CD8-positive, alpha-beta T cell (primary cell): ENCODE measurements at regions of chr4 and their contacts with region 1.

Region 1: GRCh38 chr4:135306538-135306937 is 1104.9 kb upstream of the PABPC4L start:
- DNase-seq: no peak
- ATAC-seq: no peak
- H3K4me3 ChIP-seq: no peak overlapping the region
- H3K4me3 Mint-ChIP-seq: no peak overlapping the region
- H3K27ac ChIP-seq: no peak overlapping the region
- H3K27ac Mint-ChIP-seq: no peak overlapping the region
- H3K4me1 ChIP-seq: no peaks in the 10 kb centered on the region
- H3K4me1 Mint-ChIP-seq: no peaks in the 10 kb centered on the region
- H3K27me3 ChIP-seq: no peaks in the 10 kb centered on the region
- H3K27me3 Mint-ChIP-seq: no peaks in the 10 kb centered on the region
- CTCF ChIP-seq: no peak

Region 2: GRCh38 chr4:135240796-135241195 is 65.7 kb before region 1 on chr4:
- CTCF ChIA-PET with region 1: no interaction called
- POLR2A ChIA-PET with region 1: no interaction called
- intact Hi-C with region 1: no loop called
- DNase-seq: no peak
- ATAC-seq: no peak
- H3K4me3 ChIP-seq: no peak overlapping the region
- H3K4me3 Mint-ChIP-seq: no peak overlapping the region
- H3K27ac ChIP-seq: no peak overlapping the region
- H3K27ac Mint-ChIP-seq: no peak overlapping the region
- H3K4me1 ChIP-seq: no peaks in the 10 kb centered on the region
- H3K4me1 Mint-ChIP-seq: no peaks in the 10 kb centered on the region
- H3K27me3 ChIP-seq: no peaks in the 10 kb centered on the region
- H3K27me3 Mint-ChIP-seq: no peaks in the 10 kb centered on the region
- CTCF ChIP-seq: no peak

Region 3: DNA sequence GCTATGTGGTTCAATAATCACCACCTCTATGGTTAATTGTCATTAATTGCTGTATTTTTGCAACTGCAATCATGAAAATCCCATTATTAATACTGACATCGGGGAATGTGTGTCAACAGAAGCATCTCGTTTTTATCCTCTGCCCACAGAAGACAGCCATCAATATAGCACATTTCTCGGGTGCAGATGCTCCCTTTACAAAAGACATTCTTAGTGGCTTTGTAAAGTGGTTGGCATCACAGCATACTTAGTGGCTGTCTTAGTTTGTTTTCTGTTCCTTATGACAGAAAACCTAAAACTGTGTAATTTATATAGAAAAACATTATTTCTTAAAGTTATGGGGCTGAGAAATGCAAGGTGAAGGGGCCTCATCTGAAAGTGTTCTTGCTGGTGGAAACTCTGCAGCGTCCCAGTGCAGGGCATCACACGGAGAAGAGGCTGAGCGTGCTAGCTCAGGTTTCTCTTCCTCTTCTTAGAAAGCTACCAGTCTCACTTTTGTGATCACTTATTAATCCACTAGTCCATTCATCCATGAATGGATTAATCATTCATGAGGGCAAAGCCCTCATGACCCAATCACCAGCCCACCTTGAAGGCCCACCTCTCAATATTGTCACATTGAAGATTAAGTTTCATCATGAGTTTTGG is 37.3 kb before region 1 on chr4:
- CTCF ChIA-PET with region 1: no interaction called
- POLR2A ChIA-PET with region 1: no interaction called
- intact Hi-C with region 1: no loop called
- DNase-seq: no peak
- ATAC-seq: no peak
- H3K4me3 ChIP-seq: no peak overlapping the region
- H3K4me3 Mint-ChIP-seq: no peak overlapping the region
- H3K27ac ChIP-seq: no peak overlapping the region
- H3K27ac Mint-ChIP-seq: no peak overlapping the region
- H3K4me1 ChIP-seq: no peaks in the 10 kb centered on the region
- H3K4me1 Mint-ChIP-seq: no peaks in the 10 kb centered on the region
- H3K27me3 ChIP-seq: no peaks in the 10 kb centered on the region
- H3K27me3 Mint-ChIP-seq: no peaks in the 10 kb centered on the region
- CTCF ChIP-seq: no peak

Region 4: GRCh38 chr4:135282676-135283075 is 23.9 kb before region 1 on chr4:
- CTCF ChIA-PET with region 1: no interaction called
- POLR2A ChIA-PET with region 1: no interaction called
- intact Hi-C with region 1: no loop called
- DNase-seq: no peak
- ATAC-seq: no peak
- H3K4me3 ChIP-seq: no peak overlapping the region
- H3K4me3 Mint-ChIP-seq: no peak overlapping the region
- H3K27ac ChIP-seq: no peak overlapping the region
- H3K27ac Mint-ChIP-seq: no peak overlapping the region
- H3K4me1 ChIP-seq: no peaks in the 10 kb centered on the region
- H3K4me1 Mint-ChIP-seq: no peaks in the 10 kb centered on the region
- H3K27me3 ChIP-seq: no peaks in the 10 kb centered on the region
- H3K27me3 Mint-ChIP-seq: no peaks in the 10 kb centered on the region
- CTCF ChIP-seq: no peak

Region 5: GRCh38 chr4:135838889-135839288 is 532.4 kb after region 1 on chr4:
- CTCF ChIA-PET with region 1: no interaction called
- POLR2A ChIA-PET with region 1: no interaction called
- intact Hi-C with region 1: no loop called
- DNase-seq: no peak
- ATAC-seq: no peak
- H3K4me3 ChIP-seq: no peak overlapping the region
- H3K4me3 Mint-ChIP-seq: no peak overlapping the region
- H3K27ac ChIP-seq: no peak overlapping the region
- H3K27ac Mint-ChIP-seq: no peak overlapping the region
- H3K4me1 ChIP-seq: no peaks in the 10 kb centered on the region
- H3K4me1 Mint-ChIP-seq: no peaks in the 10 kb centered on the region
- H3K27me3 ChIP-seq: no peaks in the 10 kb centered on the region
- H3K27me3 Mint-ChIP-seq: no peaks in the 10 kb centered on the region
- CTCF ChIP-seq: no peak

Region 6: GRCh38 chr4:136056748-136057147 is 750.2 kb after region 1 on chr4:
- CTCF ChIA-PET with region 1: no interaction called
- POLR2A ChIA-PET with region 1: no interaction called
- intact Hi-C with region 1: loop called in 1 of 2 experiments (anchors 5 kb)
- DNase-seq: no peak
- ATAC-seq: no peak
- H3K4me3 ChIP-seq: no peak overlapping the region
- H3K4me3 Mint-ChIP-seq: no peak overlapping the region
- H3K27ac ChIP-seq: no peak overlapping the region
- H3K27ac Mint-ChIP-seq: no peak overlapping the region
- H3K4me1 ChIP-seq: no peaks in the 10 kb centered on the region
- H3K4me1 Mint-ChIP-seq: no peaks in the 10 kb centered on the region
- H3K27me3 ChIP-seq: no peaks in the 10 kb centered on the region
- H3K27me3 Mint-ChIP-seq: no peaks in the 10 kb centered on the region
- CTCF ChIP-seq: no peak